ENCODE measurements at regions of chr10 and their contacts with region 1.

Region 1: DNA sequence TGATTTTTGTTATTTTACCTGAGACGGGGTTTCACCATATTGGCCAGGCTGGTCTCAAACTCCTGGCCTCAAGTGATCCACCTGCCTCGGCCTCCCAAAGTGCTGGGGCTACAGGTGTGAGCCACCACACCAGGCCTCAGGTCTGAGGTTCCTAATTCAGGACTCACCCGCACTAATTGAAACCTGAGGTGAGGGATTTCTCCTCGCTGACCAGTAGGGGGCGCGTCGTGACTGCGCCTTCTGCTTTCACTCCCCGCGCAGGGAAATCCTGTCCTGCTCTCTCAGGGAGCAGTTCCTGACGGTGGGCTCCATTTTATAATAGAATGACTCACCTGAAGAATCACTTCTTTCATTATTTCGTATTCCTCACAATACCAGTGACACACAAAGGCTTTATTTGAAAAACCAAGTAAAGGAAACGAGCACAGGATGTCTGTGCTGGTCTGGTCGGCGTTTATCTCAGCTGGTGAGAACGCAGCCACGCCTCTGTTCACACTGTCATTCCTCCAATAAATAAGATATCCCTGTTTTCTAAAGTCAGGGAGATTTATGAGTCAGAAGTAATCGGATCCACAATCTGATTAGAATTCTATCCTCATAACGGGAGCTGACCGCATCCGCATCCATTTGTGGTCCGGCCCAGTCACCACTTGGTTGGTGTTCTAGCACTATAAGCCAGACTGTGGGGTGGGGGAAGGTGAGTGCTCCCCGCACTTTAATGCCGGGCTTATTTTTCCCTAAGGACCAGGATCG is 35.4 kb downstream of the BAG3 start:
- DNase-seq: peak; percentile 80
- H3K4me3 Mint-ChIP-seq: peak overlapping the region; percentile 40
- H3K27ac Mint-ChIP-seq: peak overlapping the region; percentile 52
- H3K4me1 Mint-ChIP-seq: peaks cover 21% of the 10 kb centered on the region
- H3K27me3 Mint-ChIP-seq: peaks cover 2% of the 10 kb centered on the region

Region 2: DNA sequence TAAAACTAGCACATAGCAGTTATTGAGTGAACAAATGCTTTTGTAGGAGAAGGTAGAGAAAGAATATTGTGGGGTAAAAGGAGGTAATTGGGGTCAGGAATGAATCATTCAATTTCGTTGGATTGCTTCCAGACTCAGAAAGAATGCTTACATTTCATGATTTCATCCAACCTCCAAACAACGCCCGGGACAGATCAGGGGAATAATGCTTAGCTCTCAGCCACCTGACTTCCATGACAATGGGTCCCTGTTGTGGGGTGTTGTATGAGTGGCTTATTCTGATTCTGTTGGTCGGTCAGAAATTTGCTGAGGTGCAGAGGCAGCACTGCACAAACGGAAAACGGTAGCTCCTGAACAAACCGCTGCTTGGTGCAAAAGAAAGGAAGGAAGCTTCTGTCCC is 15.2 kb after region 1 on chr10:
- CTCF ChIA-PET with region 1: interaction called, 14 read pairs
- POLR2A ChIA-PET with region 1: no interaction called
- DNase-seq: no peak
- H3K4me3 Mint-ChIP-seq: no peak overlapping the region
- H3K27ac Mint-ChIP-seq: no peak overlapping the region
- H3K4me1 Mint-ChIP-seq: peaks cover 34% of the 10 kb centered on the region
- H3K27me3 Mint-ChIP-seq: no peaks in the 10 kb centered on the region

Region 3: DNA sequence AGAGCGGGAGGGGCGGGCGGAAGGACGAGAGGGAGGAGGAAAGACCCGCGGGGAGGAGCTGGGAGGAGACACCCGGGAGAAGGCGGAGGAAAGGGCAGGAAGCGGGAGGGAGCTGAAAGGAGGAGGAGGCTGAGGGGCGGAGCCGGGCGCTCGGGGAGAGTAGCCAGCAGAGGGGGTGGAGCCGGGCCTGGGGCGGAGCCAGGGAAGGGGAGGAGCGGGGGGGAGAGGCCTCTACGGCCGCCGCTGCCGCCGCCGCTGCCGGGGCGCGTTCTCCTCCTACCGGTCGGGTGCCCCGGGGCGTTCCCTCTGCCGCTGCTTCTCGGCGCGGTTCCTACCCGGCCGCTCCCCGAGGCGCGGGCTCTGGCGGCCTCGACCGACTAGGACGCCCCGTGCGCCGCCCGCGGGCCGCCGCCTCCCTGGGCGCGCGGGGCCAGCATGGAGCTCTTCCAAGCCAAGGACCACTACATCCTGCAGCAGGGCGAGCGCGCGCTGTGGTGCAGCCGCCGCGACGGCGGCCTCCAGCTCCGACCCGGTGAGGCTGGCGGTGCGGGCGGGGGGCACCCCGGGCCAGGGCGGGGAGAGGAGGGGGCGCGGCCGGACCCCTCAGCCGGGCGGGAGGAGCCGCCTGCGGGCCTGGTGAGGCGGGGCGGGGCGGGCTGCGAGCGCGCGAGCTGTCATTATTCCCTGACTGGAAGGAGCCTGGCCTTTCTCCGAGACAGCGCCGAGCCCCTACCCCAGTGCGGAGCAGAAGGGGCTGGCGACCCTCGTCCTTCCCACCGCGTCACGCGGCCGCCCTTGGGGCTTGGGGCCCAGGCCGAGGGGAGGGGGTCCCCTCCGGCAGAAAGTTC is 39.4 kb after region 1 on chr10 and contains the start of gene INPP5F:
- CTCF ChIA-PET with region 1: interaction called, 12 read pairs
- POLR2A ChIA-PET with region 1: no interaction called
- DNase-seq: peak; percentile 99
- H3K4me3 Mint-ChIP-seq: peak within 1 kb of the TSS; percentile 83
- H3K27ac Mint-ChIP-seq: peak within 1 kb of the TSS; percentile 79
- H3K4me1 Mint-ChIP-seq: peaks cover 39% of the 10 kb centered on the region
- H3K27me3 Mint-ChIP-seq: no peaks in the 10 kb centered on the region
- total RNA-seq, gene INPP5F: 11.1 to 12.3 TPM

Region 4: GRCh38 chr10:119761106-119761505 is 74.5 kb after region 1 on chr10:
- CTCF ChIA-PET with region 1: no interaction called
- POLR2A ChIA-PET with region 1: no interaction called
- DNase-seq: no peak
- H3K4me3 Mint-ChIP-seq: no peak overlapping the region
- H3K27ac Mint-ChIP-seq: no peak overlapping the region
- H3K4me1 Mint-ChIP-seq: peaks cover 2% of the 10 kb centered on the region
- H3K27me3 Mint-ChIP-seq: no peaks in the 10 kb centered on the region

Region 5: DNA sequence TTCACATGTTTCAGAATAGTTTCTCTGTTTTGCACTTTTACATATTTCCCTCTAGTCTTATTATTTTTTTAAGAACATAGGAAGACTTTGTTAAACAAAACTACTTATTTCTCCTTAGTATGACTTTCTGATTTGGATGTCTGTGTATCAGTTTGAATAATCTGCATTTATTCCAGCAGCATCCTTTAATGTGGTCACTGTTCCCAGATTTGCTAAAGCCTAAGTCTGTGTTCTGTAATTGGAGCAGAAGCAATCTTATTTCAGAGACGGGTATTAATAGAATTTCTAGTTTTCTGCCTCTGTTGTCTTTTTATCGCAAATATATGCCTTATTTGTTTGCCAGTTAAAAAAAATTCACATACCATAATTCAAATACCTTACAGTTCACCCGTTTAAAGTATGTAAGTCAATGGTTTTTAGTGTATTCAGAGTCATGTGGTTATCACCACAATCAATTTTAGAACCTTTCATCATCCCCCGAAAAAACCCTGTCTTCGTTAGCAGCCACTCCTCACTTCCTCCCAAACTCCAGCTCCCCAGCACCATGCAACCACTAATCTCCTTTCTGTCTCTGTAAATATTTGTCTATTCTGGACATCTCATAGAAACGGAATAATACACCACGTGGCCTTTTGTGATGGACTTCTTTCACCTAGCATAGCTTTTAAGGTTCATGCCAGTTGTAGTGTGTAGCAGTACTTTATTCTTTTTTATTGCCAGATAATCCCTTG is 97.9 kb after region 1 on chr10:
- CTCF ChIA-PET with region 1: no interaction called
- POLR2A ChIA-PET with region 1: no interaction called
- DNase-seq: peak; percentile 32
- H3K4me3 Mint-ChIP-seq: no peak overlapping the region
- H3K27ac Mint-ChIP-seq: peak overlapping the region; percentile 42
- H3K4me1 Mint-ChIP-seq: peaks cover 40% of the 10 kb centered on the region
- H3K27me3 Mint-ChIP-seq: no peaks in the 10 kb centered on the region

Measured in activated CD4-positive, alpha-beta T cell treated with anti-CD3 and anti-CD28 coated beads, Interleukin-2, amount 10 ng/mL, durations not matched to agents 7 days and 5 days (primary cell).